Posterior cingulate gyrus (tissue), 11 donors: ENCODE measurements at regions of chr10 and their contacts with region 1.

Region 1: DNA sequence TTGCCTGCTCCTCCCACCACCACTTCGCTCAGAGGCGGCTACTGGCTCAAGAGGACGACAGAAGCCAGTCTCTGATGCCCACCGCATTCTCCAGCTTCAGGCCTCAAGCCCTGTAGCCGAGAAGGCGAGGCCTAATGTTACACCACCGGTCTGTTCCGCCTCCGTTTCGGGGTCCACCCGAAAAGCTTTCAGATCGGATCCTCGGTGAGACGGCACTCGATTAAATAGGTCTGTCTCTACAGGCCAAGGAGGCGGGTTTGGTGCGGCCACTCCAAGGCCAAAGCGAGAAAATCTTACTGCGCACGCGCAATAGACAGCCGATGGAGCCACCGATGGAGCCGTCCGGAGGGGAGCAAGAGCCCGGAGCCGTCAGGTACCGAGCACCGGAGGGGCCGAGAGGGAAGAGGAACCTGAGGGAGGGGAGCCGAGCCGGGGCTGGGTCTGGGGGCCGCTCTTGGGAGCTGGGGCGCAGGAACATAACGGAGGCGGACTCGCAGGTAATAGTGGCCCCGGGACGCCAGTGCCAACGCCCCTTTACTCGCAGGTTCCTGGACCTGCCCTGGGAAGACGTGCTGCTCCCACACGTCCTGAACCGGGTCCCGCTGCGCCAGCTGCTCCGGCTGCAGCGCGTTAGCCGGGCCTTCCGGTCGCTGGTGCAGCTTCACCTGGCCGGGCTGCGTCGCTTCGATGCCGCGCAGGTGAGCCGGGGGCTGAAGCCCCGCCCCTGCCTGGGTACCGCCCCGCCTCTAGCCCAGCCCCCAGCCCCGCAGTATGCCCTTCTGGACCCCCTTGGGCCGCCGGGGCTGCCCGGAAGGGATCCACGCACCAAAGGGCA is at the start of gene FBXL15:
- DNase-seq: peak; percentile 89 to 99 (median 94)

Region 2: GRCh38 chr10:102432162-102432950 is 11.3 kb after region 1 on chr10 and contains the start of gene CUEDC2:
- intact Hi-C with region 1: loop called (anchors 1 kb)
- DNase-seq: peak; percentile 94 to 100 (median 98)

Region 3: DNA sequence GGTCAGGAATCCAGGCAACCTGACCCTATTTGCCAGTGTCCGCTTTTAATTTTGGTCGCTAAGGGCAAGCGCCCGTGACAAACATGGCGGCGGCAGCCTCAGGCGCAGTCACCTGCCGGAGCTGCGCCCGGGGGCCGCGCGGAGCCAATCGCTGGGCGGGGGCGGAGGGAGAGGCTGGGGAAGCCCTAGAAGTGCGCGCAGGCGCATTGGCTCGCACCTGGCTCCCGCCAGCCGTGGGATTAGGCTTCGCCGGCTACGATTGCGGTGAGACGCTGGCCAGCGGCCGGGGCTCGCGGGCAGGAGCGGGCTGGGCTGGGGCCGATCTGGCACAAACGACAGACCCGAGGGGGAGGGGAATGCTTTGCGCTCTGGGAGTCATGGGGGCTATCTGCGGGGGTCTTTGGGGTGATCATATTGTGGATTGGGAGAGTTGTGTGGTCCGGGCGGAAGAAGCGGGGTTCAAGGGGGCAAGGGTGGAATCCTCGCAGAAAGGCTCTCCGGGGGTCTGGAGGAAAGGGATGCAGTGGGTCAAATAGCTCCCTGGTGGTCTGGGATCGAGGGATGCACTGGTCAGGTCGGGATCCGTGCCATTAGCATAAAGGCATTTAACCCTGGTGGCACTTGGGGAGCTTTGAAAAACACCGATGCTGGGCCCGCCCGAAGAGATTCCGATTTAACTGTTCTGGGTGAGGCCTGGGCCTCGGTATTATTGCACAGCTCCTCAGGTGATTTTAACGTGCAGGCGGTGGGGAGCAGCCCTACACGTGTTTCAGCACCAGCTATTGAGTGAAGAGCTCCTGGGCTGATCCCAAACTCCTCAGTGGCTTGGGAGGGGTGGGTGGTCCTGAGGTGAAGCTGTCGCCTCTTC is 40.4 kb after region 1 on chr10:
- intact Hi-C with region 1: loop called (anchors 5 kb)
- DNase-seq: peak; percentile 82 to 99 (median 90)

Region 4: GRCh38 chr10:102713814-102714620 is 293.0 kb after region 1 on chr10 and contains the start of gene ARL3:
- intact Hi-C with region 1: no loop called
- DNase-seq: peak; percentile 96 to 100 (median 98)